Activated B cell treated with CpG ODN at 0.5 μM for 24 hours (primary cell): ENCODE measurements at regions of chr20 and their contacts with region 1.

Region 1: DNA sequence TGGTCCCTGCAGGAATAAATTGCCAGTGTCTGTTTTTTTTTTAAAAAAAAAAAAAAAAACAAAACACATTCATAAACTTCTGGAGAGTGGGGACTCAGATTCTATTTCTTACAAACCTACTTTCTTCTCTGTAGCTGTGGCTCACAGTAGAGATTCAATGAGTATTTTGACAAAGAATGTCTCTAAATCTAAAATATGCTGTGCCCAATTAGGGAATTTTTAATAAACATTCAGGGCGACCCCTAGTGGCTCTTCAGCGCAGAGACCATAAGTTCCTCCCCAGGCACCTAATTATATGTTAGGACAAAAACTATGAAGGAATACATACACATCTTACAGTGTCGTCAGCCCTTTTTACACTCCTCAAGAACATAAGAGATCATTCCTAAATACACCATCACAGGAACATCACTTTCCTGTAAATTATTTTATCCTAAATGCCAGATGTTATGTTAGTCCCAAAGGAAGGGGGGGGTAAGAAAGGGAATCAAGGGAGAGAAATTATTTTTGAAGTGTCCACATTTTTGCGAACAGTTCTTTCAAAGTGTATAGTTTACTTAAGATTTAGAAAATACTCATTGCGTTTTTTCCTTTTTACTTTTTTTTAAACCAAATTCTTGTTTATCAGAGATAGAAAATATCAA is 21.8 kb upstream of the NAA20 start:
- DNase-seq: no peak
- ATAC-seq: peak; percentile 57
- H3K4me3 Mint-ChIP-seq: no peak overlapping the region
- H3K27ac Mint-ChIP-seq: no peak overlapping the region
- H3K4me1 Mint-ChIP-seq: no peaks in the 10 kb centered on the region
- H3K27me3 Mint-ChIP-seq: peaks cover 3% of the 10 kb centered on the region
- CTCF ChIP-seq: peak; percentile 86

Region 2: GRCh38 chr20:19628570-19629169 is 366.7 kb before region 1 on chr20:
- CTCF ChIA-PET with region 1: no interaction called
- POLR2A ChIA-PET with region 1: no interaction called
- intact Hi-C with region 1: loop called (anchors 1 kb)
- DNase-seq: no peak
- ATAC-seq: peak; percentile 78
- H3K4me3 Mint-ChIP-seq: no peak overlapping the region
- H3K27ac Mint-ChIP-seq: no peak overlapping the region
- H3K4me1 Mint-ChIP-seq: peaks cover 3% of the 10 kb centered on the region
- H3K27me3 Mint-ChIP-seq: peaks cover 8% of the 10 kb centered on the region
- CTCF ChIP-seq: no peak

Region 3: GRCh38 chr20:19784511-19785172 is 210.7 kb before region 1 on chr20:
- CTCF ChIA-PET with region 1: interaction called, 43 read pairs
- POLR2A ChIA-PET with region 1: no interaction called
- intact Hi-C with region 1: loop called (anchors 1 kb)
- DNase-seq: no peak
- ATAC-seq: peak; percentile 71
- H3K4me3 Mint-ChIP-seq: no peak overlapping the region
- H3K27ac Mint-ChIP-seq: no peak overlapping the region
- H3K4me1 Mint-ChIP-seq: peaks cover 22% of the 10 kb centered on the region
- H3K27me3 Mint-ChIP-seq: no peaks in the 10 kb centered on the region
- CTCF ChIP-seq: no peak

Region 4: GRCh38 chr20:19828232-19828631 is 167.1 kb before region 1 on chr20:
- CTCF ChIA-PET with region 1: interaction called, 7 read pairs
- POLR2A ChIA-PET with region 1: no interaction called
- intact Hi-C with region 1: loop called (anchors 1 kb)
- DNase-seq: no peak
- ATAC-seq: peak; percentile 96
- H3K4me3 Mint-ChIP-seq: peak overlapping the region; percentile 6
- H3K27ac Mint-ChIP-seq: peak overlapping the region; percentile 56
- H3K4me1 Mint-ChIP-seq: peaks cover 58% of the 10 kb centered on the region
- H3K27me3 Mint-ChIP-seq: no peaks in the 10 kb centered on the region
- CTCF ChIP-seq: no peak

Region 5: GRCh38 chr20:19915111-19915798 is 80.1 kb before region 1 on chr20:
- CTCF ChIA-PET with region 1: interaction called, 3 read pairs
- POLR2A ChIA-PET with region 1: no interaction called
- intact Hi-C with region 1: loop called (anchors 5 kb)
- DNase-seq: peak; percentile 28
- ATAC-seq: peak; percentile 78
- H3K4me3 Mint-ChIP-seq: peak overlapping the region; percentile 29
- H3K27ac Mint-ChIP-seq: peak overlapping the region; percentile 87
- H3K4me1 Mint-ChIP-seq: peaks cover 65% of the 10 kb centered on the region
- H3K27me3 Mint-ChIP-seq: no peaks in the 10 kb centered on the region
- CTCF ChIP-seq: no peak

Region 6: DNA sequence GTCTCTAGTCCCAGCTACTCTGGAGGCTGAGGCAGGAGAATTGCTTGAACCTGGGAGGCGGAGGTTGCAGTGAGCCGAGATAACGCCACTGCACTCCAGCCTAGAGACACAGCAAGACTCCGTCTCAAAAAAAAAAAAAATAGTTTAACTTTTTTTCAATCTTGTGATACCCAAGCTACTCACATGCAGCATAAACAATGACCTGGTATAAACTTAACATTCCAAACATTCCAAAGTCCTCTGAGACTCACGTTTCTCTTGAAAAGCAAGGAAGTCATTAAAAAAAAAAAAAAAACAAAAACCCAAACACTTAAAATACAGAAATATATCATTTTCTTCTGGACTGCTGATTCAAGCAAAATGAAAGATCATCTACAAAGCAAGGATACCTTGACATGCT is 42.6 kb after region 1 on chr20:
- CTCF ChIA-PET with region 1: no interaction called
- POLR2A ChIA-PET with region 1: no interaction called
- intact Hi-C with region 1: no loop called
- DNase-seq: no peak
- ATAC-seq: no peak
- H3K4me3 Mint-ChIP-seq: no peak overlapping the region
- H3K27ac Mint-ChIP-seq: no peak overlapping the region
- H3K4me1 Mint-ChIP-seq: no peaks in the 10 kb centered on the region
- H3K27me3 Mint-ChIP-seq: no peaks in the 10 kb centered on the region
- CTCF ChIP-seq: no peak